CD8-positive, alpha-beta T cell (primary cell): ENCODE measurements at regions of chr10 and their contacts with region 1.

Region 1: GRCh38 chr10:72223743-72224101 is 7.6 kb upstream of the ASCC1 start:
- DNase-seq: no peak
- ATAC-seq: no peak
- H3K4me3 ChIP-seq: no peak overlapping the region
- H3K4me3 Mint-ChIP-seq: no peak overlapping the region
- H3K27ac ChIP-seq: no peak overlapping the region
- H3K27ac Mint-ChIP-seq: peak overlapping the region; percentile 39
- H3K4me1 ChIP-seq: peaks cover 61% of the 10 kb centered on the region
- H3K4me1 Mint-ChIP-seq: peaks cover 59% of the 10 kb centered on the region
- H3K27me3 ChIP-seq: no peaks in the 10 kb centered on the region
- H3K27me3 Mint-ChIP-seq: no peaks in the 10 kb centered on the region
- CTCF ChIP-seq: no peak

Region 2: DNA sequence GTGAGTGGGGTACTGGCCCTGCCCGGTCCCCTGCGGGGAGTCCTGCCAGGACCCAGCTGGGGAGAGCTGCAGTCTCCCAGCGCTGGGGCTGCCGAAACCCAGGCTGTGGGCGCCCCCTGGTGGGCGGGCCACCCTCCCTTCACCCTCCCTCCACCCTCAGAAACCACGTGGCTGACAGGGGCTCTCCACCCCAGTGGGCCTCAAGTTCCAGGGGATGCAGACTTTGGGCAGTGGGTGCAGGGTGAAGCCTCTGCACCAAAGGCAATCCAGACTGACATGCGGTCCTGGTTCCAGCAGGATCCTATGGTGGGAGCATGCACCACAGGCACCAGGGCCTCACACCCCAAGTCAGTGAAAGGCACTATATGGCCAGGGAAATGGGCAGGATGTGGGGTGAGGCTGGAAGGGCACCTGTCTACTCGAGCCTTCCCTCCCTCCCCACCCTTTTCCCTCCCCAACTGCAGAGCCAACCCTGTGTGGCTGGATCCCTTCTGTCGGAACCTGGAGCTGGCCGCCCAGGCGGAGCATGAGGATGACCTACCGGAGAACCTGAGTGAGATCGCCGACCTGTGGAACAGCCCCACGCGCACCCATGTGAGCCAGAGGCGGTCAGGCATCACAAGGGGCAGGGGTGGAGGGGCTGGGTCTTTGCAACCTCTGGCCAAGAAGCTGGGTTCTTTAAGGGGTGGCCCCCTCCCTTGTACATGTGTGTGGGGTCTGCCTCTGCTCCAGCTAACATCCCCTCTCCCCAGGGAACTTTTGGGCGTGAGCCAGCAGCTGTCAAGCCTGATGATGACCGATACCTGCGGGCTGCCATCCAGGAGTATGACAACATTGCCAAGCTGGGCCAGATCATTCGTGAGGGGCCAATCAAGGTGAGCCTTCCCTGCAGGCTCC is 411.5 kb before region 1 on chr10:
- CTCF ChIA-PET with region 1: no interaction called
- POLR2A ChIA-PET with region 1: no interaction called
- intact Hi-C with region 1: no loop called
- DNase-seq: peak; percentile 63 to 91 (median 79)
- ATAC-seq: peak; percentile 91
- H3K4me3 ChIP-seq: no peak overlapping the region
- H3K4me3 Mint-ChIP-seq: no peak overlapping the region
- H3K27ac ChIP-seq: no peak overlapping the region
- H3K27ac Mint-ChIP-seq: no peak overlapping the region
- H3K4me1 ChIP-seq: peaks cover 4% of the 10 kb centered on the region
- H3K4me1 Mint-ChIP-seq: peaks cover 2% of the 10 kb centered on the region
- H3K27me3 ChIP-seq: no peaks in the 10 kb centered on the region
- H3K27me3 Mint-ChIP-seq: no peaks in the 10 kb centered on the region
- CTCF ChIP-seq: peak; percentile 79

Region 3: GRCh38 chr10:71899665-71900412 is 323.9 kb before region 1 on chr10:
- CTCF ChIA-PET with region 1: interaction called, 9 read pairs
- POLR2A ChIA-PET with region 1: no interaction called
- intact Hi-C with region 1: loop called (anchors 5 kb)
- DNase-seq: no peak
- ATAC-seq: no peak
- H3K4me3 ChIP-seq: no peak overlapping the region
- H3K4me3 Mint-ChIP-seq: no peak overlapping the region
- H3K27ac ChIP-seq: no peak overlapping the region
- H3K27ac Mint-ChIP-seq: no peak overlapping the region
- H3K4me1 ChIP-seq: no peaks in the 10 kb centered on the region
- H3K4me1 Mint-ChIP-seq: peaks cover 2% of the 10 kb centered on the region
- H3K27me3 ChIP-seq: no peaks in the 10 kb centered on the region
- H3K27me3 Mint-ChIP-seq: no peaks in the 10 kb centered on the region
- CTCF ChIP-seq: no peak

Region 4: DNA sequence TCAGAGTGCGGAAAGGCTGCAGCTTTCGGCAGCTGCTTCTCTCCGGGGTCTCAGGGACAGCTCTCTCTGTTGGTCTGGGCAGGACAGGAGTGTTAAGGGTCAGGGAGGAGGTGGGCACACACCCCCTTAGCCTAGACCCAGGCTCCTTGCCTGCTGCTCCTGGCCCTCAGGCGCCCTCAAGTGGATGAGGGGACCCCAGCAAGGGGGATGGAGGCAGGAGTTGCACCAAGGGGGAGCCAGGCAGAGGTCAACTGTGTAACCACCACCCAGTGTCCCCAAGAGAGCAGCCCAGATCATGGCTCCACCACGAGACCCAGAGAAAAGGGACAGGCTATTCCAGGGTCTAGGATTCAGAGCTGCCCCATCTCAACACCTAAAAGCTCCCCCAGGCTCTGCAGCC is 162.2 kb before region 1 on chr10:
- CTCF ChIA-PET with region 1: interaction called, 4 read pairs
- POLR2A ChIA-PET with region 1: interaction called, 4 read pairs
- intact Hi-C with region 1: loop called in 1 of 2 experiments (anchors 5 kb)
- DNase-seq: peak in 1 of 9 experiments; percentile 50
- ATAC-seq: peak; percentile 16
- H3K4me3 ChIP-seq: no peak overlapping the region
- H3K4me3 Mint-ChIP-seq: no peak overlapping the region
- H3K27ac ChIP-seq: peak overlapping the region in 1 of 2 experiments; percentile 14
- H3K27ac Mint-ChIP-seq: peak overlapping the region; percentile 83
- H3K4me1 ChIP-seq: peaks cover 8% of the 10 kb centered on the region
- H3K4me1 Mint-ChIP-seq: peaks cover 46% of the 10 kb centered on the region
- H3K27me3 ChIP-seq: no peaks in the 10 kb centered on the region
- H3K27me3 Mint-ChIP-seq: no peaks in the 10 kb centered on the region
- CTCF ChIP-seq: no peak

Region 5: DNA sequence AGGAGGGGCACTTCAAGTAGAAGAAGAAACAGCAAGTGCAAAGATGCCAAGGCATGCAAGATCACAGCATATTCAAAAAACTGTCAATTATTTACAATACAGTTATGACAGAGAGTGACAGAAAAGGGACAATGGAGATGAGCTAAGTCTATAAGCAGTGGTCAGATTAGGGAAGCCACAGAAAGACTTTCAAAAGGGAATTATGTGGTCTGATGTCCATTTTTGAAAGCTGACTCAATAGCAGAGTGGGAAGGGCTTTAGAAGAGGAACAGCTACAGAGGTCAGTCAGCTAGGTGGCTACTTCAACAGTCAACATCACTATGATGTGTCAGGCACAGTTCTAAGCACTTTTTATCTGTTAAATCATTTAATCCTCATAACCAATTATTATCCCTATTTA is 90.2 kb before region 1 on chr10:
- CTCF ChIA-PET with region 1: interaction called, 8 read pairs
- POLR2A ChIA-PET with region 1: no interaction called
- intact Hi-C with region 1: loop called (anchors 1 to 5 kb)
- DNase-seq: no peak
- ATAC-seq: no peak
- H3K4me3 ChIP-seq: no peak overlapping the region
- H3K4me3 Mint-ChIP-seq: no peak overlapping the region
- H3K27ac ChIP-seq: no peak overlapping the region
- H3K27ac Mint-ChIP-seq: peak overlapping the region; percentile 30
- H3K4me1 ChIP-seq: peaks cover 41% of the 10 kb centered on the region
- H3K4me1 Mint-ChIP-seq: peaks cover 43% of the 10 kb centered on the region
- H3K27me3 ChIP-seq: no peaks in the 10 kb centered on the region
- H3K27me3 Mint-ChIP-seq: no peaks in the 10 kb centered on the region
- CTCF ChIP-seq: no peak

Region 6: GRCh38 chr10:72162978-72163377 is 60.7 kb before region 1 on chr10:
- CTCF ChIA-PET with region 1: no interaction called
- POLR2A ChIA-PET with region 1: interaction called, 3 read pairs
- intact Hi-C with region 1: loop called in 1 of 2 experiments (anchors 5 kb)
- DNase-seq: no peak
- ATAC-seq: no peak
- H3K4me3 ChIP-seq: no peak overlapping the region
- H3K4me3 Mint-ChIP-seq: no peak overlapping the region
- H3K27ac ChIP-seq: no peak overlapping the region
- H3K27ac Mint-ChIP-seq: no peak overlapping the region
- H3K4me1 ChIP-seq: peaks cover 8% of the 10 kb centered on the region
- H3K4me1 Mint-ChIP-seq: peaks cover 9% of the 10 kb centered on the region
- H3K27me3 ChIP-seq: no peaks in the 10 kb centered on the region
- H3K27me3 Mint-ChIP-seq: no peaks in the 10 kb centered on the region
- CTCF ChIP-seq: no peak